ENCODE measurements at regions of chr7 and their contacts with region 1.

Region 1: GRCh38 chr7:30731619-30732018 is 20.3 kb upstream of the INMT start:
- DNase-seq: no peak
- ATAC-seq: no peak
- H3K4me3 ChIP-seq: no peak overlapping the region
- H3K27ac ChIP-seq: no peak overlapping the region
- H3K4me1 ChIP-seq: no peaks in the 10 kb centered on the region
- H3K27me3 ChIP-seq: no peaks in the 10 kb centered on the region
- CTCF ChIP-seq: no peak

Region 2: DNA sequence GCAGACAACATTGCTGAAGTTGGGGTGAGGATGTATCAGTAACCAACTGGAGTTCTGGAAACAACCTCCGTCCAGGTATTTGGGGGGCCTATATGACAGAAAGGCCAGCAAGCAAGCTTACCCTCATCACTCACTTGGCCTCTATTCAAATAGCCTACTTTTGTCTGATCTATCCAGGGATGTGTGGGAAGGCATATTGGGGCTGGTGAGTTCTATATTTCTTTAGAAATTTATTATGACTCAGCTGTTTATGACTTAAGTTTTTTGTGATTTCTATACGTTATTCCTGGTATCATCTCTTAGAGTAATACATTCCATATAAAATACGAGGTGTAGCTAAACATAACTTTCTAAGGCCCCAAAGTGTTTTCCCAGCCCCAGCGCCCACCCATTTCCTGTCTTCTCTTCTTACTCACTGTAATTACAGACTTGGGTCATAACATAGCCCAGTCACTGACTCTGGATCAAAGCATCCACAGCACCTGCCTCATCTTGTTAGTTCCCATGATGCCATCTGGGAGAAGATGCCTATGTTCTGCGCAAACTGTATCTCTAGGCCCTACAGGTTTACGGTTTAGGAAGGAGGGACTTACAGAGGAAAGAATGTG is 118.9 kb before region 1 on chr7:
- intact Hi-C with region 1: loop called in 1 of 2 experiments (anchors 10 kb)
- DNase-seq: no peak
- ATAC-seq: no peak
- H3K4me3 ChIP-seq: no peak overlapping the region
- H3K27ac ChIP-seq: no peak overlapping the region
- H3K4me1 ChIP-seq: no peaks in the 10 kb centered on the region
- H3K27me3 ChIP-seq: no peaks in the 10 kb centered on the region
- CTCF ChIP-seq: no peak

Region 3: DNA sequence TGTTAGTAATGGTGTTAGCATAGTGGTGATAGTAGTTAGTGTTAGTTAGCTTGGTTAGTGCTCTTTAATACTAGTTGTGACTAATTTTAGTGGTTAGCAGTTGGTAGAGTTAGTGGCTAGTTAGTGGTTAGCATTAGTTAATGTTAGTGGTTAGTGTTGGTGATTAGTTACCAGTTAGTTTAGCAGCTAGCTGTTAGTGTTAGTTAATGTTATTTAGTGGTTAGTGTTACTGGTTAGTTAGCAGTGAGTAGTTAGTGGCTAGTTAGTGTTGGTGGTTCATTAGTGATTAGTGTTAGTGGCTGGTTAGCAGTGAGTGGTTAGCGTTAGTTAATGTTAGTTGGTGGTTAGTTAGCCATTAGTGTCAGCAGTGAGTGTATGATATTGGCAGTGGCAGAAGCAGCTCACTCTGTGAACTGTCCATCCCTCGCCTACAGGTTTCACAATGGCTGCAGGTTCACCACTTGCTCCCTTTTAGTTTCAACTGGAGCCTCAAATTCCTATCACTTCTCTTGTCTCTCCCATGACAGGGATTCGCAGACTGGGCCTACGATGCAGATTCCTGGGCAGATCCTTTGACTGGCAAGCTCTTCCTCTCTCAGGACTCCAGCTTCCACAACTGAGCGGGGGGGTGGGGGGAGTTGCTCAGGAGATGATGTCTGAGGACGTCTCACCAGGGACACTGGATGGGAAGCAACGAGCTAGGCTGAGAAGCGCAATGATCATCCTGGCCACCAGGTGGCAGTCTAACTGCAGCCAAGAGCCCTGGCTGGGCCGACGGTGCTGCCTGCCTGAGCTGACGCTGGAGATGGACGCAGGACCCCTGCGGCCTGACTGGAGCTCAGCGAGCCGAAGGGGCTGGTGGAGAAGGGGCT is 251.7 kb after region 1 on chr7:
- intact Hi-C with region 1: no loop called
- DNase-seq: peak; percentile 82 to 90
- ATAC-seq: peak; percentile 82 to 94 (median 86)
- H3K4me3 ChIP-seq: no peak overlapping the region
- H3K27ac ChIP-seq: no peak overlapping the region
- H3K4me1 ChIP-seq: no peaks in the 10 kb centered on the region
- H3K27me3 ChIP-seq: peaks cover 0 to 4% (median 2%) of the 10 kb centered on the region in 3 donors
- CTCF ChIP-seq: peak; percentile 89

Measured in psoas muscle (tissue), 8 donors.